ENCODE measurements at regions of chr13 and their contacts with region 1.

Region 1: GRCh38 chr13:47774671-47774994 is 226.4 kb downstream of the SUCLA2 start:
- DNase-seq: no peak
- H3K4me3 ChIP-seq: no peak overlapping the region
- H3K27ac ChIP-seq: no peak overlapping the region
- H3K4me1 ChIP-seq: no peaks in the 10 kb centered on the region
- H3K27me3 ChIP-seq: no peaks in the 10 kb centered on the region
- CTCF ChIP-seq: no peak

Region 2: DNA sequence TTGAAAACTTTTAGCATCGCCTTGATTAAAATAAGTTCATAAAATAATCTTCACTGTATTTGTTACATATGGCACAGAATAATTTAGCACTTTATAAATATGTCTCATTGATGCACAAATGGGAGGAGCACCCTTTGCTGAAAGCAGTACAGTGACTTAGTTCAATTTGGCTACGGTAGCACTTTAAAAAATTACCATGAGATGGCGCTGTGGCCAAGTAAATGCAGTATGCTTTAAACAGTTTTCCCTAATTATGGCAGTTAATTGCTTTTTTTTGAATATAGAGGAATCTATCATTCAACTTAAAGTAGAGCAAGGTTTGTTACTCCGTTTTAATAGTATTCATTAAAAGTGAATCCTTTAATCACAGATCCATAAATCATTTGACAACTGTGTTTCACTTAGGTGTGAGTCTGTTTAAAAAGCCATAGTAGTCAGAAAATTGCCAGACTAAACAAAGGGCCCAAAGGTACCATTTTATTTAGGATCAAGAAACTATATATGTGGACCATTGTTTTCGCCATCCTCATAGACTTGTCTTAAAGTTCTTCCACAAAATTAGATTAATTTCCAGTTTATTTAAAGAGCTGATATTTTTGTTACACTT is 942.9 kb before region 1 on chr13:
- CTCF ChIA-PET with region 1: no interaction called
- POLR2A ChIA-PET with region 1: no interaction called
- intact Hi-C with region 1: loop called (anchors 1 kb)
- DNase-seq: peak; percentile 69
- H3K4me3 ChIP-seq: no peak overlapping the region
- H3K27ac ChIP-seq: no peak overlapping the region
- H3K4me1 ChIP-seq: no peaks in the 10 kb centered on the region
- H3K27me3 ChIP-seq: no peaks in the 10 kb centered on the region
- CTCF ChIP-seq: peak; percentile 90

Region 3: GRCh38 chr13:46964789-46965527 is 809.7 kb before region 1 on chr13:
- CTCF ChIA-PET with region 1: no interaction called
- POLR2A ChIA-PET with region 1: no interaction called
- intact Hi-C with region 1: loop called (anchors 5 kb)
- DNase-seq: no peak
- H3K4me3 ChIP-seq: no peak overlapping the region
- H3K27ac ChIP-seq: no peak overlapping the region
- H3K4me1 ChIP-seq: no peaks in the 10 kb centered on the region
- H3K27me3 ChIP-seq: no peaks in the 10 kb centered on the region
- CTCF ChIP-seq: no peak

Region 4: GRCh38 chr13:47299304-47299703 is 475.3 kb before region 1 on chr13:
- CTCF ChIA-PET with region 1: no interaction called
- POLR2A ChIA-PET with region 1: no interaction called
- intact Hi-C with region 1: no loop called
- DNase-seq: no peak
- H3K4me3 ChIP-seq: no peak overlapping the region
- H3K27ac ChIP-seq: no peak overlapping the region
- H3K4me1 ChIP-seq: no peaks in the 10 kb centered on the region
- H3K27me3 ChIP-seq: no peaks in the 10 kb centered on the region
- CTCF ChIP-seq: no peak